Posterior cingulate gyrus (tissue), 11 donors: ENCODE measurements at regions of chr16 and their contacts with region 1.

Region 1: GRCh38 chr16:49608779-49609178 is 235.2 kb downstream of the C16orf78 start:
- DNase-seq: no peak

Region 2: GRCh38 chr16:49464877-49465504 is 143.8 kb before region 1 on chr16:
- intact Hi-C with region 1: no loop called
- DNase-seq: peak in 2 of 10 donors; percentile 6 to 74

Region 3: GRCh38 chr16:49855280-49855821 is 246.6 kb after region 1 on chr16:
- intact Hi-C with region 1: loop called (anchors 5 kb)
- DNase-seq: peak; percentile 47 to 94 (median 70)